Transverse colon (tissue), 4 donors: ENCODE measurements at regions of chr16 and their contacts with region 1.

Region 1: DNA sequence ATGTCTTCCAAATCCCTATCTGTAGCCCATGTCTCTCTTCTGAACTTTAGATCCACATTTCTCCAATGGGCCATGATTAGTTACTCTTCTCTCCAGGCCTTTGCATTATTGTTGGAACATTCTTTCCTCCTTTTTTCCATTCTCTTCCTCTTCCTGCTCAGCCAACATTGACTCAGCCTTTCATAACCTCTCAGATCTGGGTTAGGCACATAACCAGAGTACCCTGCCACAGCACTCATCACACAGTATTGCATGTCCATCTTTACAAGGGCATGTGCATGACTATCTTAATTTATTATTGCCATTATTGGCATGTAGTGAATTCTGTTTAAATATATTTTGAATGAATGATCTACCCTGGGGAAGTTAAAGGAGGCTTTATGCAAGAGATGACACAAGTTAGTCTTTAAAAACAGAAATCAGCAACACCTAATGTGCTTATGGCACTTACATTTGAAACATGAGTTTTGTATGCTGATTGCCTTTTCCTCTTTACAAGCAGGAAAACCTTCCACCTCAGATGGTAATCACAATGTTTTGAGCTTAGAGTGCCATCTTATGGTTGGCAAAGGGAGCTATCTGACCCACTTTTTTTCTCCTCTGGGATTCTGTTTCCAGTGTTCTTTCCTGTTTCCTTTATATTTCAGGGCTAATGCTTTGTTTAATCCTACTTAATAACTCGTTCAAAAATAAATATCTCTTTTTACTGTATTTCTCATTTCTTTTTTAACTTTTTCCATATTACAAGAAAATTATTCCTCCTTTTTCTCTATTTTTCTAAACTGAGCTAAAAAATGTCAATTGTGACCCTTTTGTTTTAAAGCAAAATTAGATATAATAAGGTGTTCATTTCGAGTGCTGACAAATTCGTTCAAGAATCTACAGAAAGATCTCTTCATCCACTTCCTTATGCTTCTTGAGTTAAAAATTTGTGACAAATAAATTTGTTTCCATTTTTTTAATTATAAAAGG is 151.0 kb upstream of the RBL2 start:
- DNase-seq: no peak
- H3K4me3 ChIP-seq: no peak overlapping the region
- H3K27ac ChIP-seq: no peak overlapping the region
- H3K4me1 ChIP-seq: no peaks in the 10 kb centered on the region
- H3K27me3 ChIP-seq: no peaks in the 10 kb centered on the region
- CTCF ChIP-seq: peak in 4 of 5 experiments; percentile 38 to 51 (median 40)
- EP300 ChIP-seq: no peak
- POLR2A ChIP-seq: no peak

Region 2: DNA sequence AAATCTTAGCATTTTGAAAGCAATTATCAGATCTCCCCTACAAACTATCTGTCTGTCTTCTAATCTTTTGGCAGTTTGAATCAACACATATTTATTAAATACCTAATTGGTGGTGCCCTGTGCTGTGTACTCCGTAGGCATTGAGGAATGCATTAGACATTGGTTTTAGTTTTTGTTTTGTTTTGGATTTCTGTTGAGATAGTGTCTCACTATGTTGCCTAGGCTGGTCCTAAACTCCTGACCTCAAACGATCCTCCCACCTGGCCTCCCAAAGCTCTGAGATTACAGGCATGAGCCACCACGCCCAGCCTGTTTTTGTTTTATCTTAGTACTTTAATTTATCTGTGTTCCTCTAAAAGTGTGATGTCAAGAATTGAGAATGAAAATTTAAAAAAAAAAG is 26.2 kb after region 1 on chr16:
- in situ Hi-C with region 1: no loop called
- intact Hi-C with region 1: no loop called
- DNase-seq: no peak
- H3K4me3 ChIP-seq: no peak overlapping the region
- H3K27ac ChIP-seq: no peak overlapping the region
- H3K4me1 ChIP-seq: no peaks in the 10 kb centered on the region
- H3K27me3 ChIP-seq: no peaks in the 10 kb centered on the region
- CTCF ChIP-seq: no peak
- EP300 ChIP-seq: no peak
- POLR2A ChIP-seq: no peak

Region 3: DNA sequence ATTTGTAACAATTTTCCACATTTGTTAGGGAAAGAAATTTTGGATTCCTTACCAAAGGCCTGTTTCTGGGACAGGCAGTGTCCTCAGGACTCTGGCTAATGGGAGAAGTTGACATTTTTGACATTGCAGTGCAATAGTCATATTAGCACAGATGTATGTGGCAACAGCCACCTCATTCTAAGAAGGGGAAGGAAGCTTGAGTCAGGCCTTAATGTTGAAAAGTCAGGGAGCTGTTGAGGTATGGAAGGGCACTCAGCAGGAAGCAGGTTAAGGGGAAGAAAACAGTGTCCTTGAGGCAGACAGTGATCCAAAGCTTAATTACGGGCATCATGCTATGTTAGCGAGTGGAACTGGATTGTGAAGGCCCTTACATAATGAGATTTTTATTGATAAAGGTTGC is 198.9 kb after region 1 on chr16:
- in situ Hi-C with region 1: loop called in 1 of 4 experiments (anchors 25 kb)
- intact Hi-C with region 1: no loop called
- DNase-seq: no peak
- H3K4me3 ChIP-seq: no peak overlapping the region
- H3K27ac ChIP-seq: no peak overlapping the region
- H3K4me1 ChIP-seq: no peaks in the 10 kb centered on the region
- H3K27me3 ChIP-seq: no peaks in the 10 kb centered on the region
- CTCF ChIP-seq: no peak
- EP300 ChIP-seq: no peak
- POLR2A ChIP-seq: no peak

Region 4: DNA sequence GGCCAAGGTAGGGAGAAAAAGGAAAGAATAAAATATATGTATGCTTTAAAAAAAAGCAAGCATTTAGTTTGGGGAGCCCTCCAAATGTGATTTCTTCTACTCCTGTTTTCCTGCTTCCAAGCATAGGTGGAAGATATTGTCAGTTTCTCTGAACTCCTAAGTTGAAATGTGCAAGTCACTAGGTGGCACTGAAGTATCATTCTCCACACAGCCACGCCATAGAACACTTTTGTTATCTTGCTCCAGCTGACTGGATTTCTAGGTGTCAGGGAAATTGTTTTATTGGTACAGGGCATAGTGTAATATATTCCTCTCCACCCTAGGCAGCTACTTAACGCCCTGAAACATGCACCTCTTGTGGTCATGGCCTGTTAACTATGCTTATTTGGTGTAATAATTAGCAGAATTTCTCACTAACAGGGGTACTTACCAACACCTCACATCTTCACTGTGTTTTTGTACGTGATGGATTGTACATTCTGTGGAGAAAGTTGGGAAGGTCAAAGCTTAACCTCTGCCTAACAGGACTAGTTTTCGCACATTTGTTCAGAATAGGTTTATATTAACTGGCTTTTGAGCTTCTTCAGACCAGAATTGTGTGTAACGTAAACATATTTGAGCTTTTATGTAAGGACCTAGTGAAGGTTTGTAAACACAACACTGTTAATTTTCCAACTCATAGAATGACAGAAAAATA is 490.0 kb after region 1 on chr16:
- in situ Hi-C with region 1: no loop called
- intact Hi-C with region 1: no loop called
- DNase-seq: peak; percentile 51
- H3K4me3 ChIP-seq: no peak overlapping the region
- H3K27ac ChIP-seq: peak overlapping the region; percentile 38 to 69 (median 60)
- H3K4me1 ChIP-seq: peaks cover 27 to 84% (median 60%) of the 10 kb centered on the region in 4 donors
- H3K27me3 ChIP-seq: no peaks in the 10 kb centered on the region
- CTCF ChIP-seq: peak; percentile 43 to 72 (median 54)
- EP300 ChIP-seq: no peak
- POLR2A ChIP-seq: no peak